ENCODE measurements at regions of chr6 and their contacts with region 1.

Region 1: DNA sequence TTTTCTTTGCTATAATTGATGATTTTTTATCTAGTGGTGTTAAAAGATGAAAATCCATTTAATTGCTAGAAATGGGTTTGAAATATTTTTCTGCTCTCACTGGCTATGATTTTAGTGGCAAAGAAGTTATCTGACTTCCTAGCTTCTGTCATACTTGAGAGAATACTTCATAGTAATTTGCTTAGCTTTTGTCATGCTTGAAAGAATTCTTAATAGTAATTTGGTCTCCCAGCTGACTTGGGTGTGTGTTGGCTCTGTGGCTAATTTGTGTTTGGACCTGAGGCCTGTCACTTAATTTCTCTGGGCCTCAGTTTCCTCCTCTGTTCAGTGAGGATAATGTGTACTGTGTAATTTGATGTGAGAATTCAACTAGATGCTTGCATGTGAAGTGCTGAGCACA is 12.8 kb upstream of the RMND1 start:
- DNase-seq: no peak
- H3K4me3 ChIP-seq: no peak overlapping the region
- H3K27ac ChIP-seq: no peak overlapping the region
- H3K4me1 ChIP-seq: peaks cover 5% of the 10 kb centered on the region
- CTCF ChIP-seq: no peak

Region 2: DNA sequence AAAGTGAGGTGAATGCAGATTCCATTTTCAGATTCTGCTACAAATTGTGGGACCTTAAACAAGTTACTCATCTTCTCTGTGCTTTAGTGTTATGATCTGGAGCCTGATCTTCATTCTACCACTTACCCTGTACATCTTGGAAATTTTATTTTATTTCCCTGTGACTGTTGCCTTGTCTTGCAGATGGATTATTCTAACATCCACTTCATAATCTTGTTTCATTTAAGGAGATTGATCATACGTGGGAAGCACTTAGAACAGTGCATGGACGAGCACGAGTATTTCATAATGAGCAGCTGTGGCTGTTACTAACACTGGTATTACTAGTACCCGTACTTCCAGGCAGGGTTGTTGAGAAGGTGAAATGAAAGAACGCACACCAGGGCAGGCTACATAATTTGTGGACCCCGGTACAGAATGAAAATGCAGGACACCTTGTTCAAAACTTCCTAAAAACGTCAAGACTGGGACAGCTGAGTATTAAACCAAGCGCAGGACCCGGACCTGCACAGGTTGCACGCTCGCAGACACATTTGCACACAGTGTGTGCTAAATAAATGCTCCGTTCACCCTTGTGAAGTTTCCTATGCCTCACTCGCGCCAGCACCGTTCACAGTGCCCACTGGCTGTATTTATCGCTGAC is 28.6 kb after region 1 on chr6:
- CTCF ChIA-PET with region 1: no interaction called
- POLR2A ChIA-PET with region 1: interaction called, 14 read pairs
- intact Hi-C with region 1: no loop called
- DNase-seq: no peak
- H3K4me3 ChIP-seq: peak overlapping the region; percentile 64
- H3K27ac ChIP-seq: no peak overlapping the region
- H3K4me1 ChIP-seq: no peaks in the 10 kb centered on the region
- CTCF ChIP-seq: no peak

Region 3: DNA sequence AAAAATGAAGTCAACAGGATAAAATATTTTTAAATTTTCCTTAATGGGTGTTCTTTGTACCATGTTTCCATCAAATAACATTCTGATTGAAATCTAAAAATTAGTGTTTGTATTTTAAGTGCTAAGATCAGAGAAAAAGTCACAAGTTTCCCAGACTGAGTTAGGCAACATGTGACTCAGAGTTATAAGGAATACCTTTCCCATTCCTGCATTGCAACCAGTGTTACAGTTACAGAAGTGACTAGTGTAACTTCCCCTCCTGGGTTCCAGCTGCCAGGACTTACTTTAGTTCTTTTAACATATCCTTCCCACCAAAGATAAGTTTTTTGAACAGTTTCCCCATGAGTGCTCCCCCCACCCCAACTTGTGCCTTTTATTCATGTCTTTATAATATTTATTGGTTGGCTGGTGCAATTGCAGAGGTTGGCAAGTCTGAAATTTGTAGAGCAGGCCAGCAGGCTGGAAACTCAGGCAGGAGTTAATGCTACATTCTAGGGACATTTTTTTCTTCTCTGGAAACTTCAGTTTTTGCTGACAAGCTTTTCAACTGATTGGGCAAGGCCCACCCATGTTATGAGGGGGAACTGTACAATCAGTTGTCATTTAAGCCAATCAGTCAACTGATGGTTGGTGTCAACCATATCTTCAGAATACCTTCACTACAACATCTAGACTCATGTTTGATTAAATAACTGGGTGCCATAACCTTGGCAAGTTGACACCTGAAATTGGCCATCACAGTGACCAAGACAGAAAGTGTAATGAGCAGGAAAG is 319.9 kb after region 1 on chr6:
- CTCF ChIA-PET with region 1: no interaction called
- POLR2A ChIA-PET with region 1: no interaction called
- intact Hi-C with region 1: no loop called
- DNase-seq: no peak
- H3K4me3 ChIP-seq: no peak overlapping the region
- H3K27ac ChIP-seq: no peak overlapping the region
- H3K4me1 ChIP-seq: no peaks in the 10 kb centered on the region
- CTCF ChIP-seq: no peak

Measured in OCI-LY7 (cell line).